ENCODE measurements at regions of chr16 and their contacts with region 1.

Region 1: DNA sequence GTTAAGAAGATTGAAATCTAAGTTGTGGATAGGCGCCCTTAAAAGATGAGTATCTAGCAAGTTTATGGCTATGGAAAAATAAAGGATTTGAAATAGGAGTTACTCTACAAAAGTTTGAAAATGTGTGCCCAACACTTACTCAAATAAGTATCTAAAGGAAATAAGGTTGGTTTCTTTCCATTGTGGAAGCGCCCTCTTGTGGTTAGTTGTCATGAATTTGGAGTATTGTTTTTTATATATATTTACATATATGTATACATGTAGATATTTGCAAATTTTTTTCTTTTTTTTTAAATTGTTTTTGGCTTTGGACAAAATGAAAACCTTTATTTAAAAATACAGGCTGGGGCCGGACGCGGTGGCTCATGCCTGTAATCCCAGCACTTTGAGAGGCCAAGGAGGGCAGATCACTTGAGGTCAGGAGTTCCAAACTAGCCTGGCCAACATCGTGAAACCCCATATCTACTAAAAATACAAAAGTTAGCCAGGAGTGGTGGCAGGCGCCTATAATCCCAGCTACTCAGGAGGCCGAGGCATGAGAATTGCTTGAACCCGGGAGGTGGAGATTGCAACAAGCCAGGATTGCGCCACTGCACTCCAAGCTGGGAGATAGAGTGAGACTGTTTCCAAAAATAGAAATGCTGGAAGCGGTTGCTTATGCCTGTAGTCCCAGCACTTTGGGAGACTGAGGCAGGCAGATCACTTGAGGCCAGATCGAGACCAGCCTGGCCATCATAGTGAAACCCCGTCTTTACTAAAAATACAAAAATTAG is 24.0 kb upstream of the VPS4A start:
- ATAC-seq: peak in 3 of 8 experiments; percentile 68 to 83 (median 78)
- H3K4me3 ChIP-seq: no peak overlapping the region
- H3K27ac ChIP-seq: no peak overlapping the region
- H3K4me1 ChIP-seq: no peaks in the 10 kb centered on the region

Region 2: GRCh38 chr16:69150146-69150865 is 136.8 kb before region 1 on chr16:
- in situ Hi-C with region 1: loop called in 4 of 9 experiments (anchors 25 kb)
- ATAC-seq: peak; percentile 72 to 95 (median 82)
- H3K4me3 ChIP-seq: no peak overlapping the region
- H3K27ac ChIP-seq: no peak overlapping the region
- H3K4me1 ChIP-seq: no peaks in the 10 kb centered on the region

Region 3: DNA sequence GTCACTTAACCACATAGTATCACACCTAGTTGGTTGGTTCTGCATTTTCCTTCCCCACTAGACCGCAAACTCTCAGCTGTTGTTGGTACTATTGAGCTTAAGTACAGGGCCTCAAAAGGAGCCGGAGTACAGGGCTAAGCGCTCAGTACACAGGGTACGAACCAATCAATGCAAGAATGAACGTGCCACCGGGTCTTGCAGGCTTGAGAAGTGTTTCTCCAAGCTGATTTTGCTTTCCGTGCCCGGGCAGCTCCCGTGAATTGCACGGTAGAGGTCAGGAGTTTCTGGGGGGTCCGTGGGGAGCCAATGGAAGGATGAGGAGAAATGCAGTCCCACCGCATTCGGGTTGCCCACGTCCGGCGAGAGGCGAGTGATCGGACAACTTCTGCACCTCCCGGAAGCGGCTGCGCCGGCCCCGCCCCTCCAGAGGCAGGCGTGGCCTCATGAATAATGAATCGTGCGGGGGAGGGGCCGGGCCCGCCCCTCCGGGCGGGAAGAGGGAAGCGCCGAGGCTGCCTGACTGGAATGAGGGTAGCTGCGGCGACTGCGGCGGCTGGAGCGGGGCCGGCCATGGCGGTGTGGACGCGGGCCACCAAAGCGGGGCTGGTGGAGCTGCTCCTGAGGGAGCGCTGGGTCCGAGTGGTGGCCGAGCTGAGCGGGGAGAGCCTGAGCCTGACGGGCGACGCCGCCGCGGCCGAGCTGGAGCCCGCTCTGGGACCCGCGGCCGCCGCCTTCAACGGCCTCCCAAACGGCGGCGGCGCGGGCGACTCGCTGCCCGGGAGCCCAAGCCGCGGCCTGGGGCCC is 100.3 kb before region 1 on chr16 and contains the start of gene SNTB2:
- in situ Hi-C with region 1: loop called in 1 of 9 experiments (anchors 25 kb)
- ATAC-seq: peak; percentile 76 to 94 (median 92)
- H3K4me3 ChIP-seq: peak within 1 kb of the TSS; percentile 60 to 96 (median 75)
- H3K27ac ChIP-seq: peak within 1 kb of the TSS; percentile 79
- H3K4me1 ChIP-seq: peaks cover 7 to 27% of the 10 kb centered on the region in 2 donors
- total RNA-seq, gene SNTB2: 4.7 to 34.7 (median 9.2) TPM